Posterior cingulate gyrus (tissue), 11 donors: ENCODE measurements at regions of chr12 and their contacts with region 1.

Region 1: DNA sequence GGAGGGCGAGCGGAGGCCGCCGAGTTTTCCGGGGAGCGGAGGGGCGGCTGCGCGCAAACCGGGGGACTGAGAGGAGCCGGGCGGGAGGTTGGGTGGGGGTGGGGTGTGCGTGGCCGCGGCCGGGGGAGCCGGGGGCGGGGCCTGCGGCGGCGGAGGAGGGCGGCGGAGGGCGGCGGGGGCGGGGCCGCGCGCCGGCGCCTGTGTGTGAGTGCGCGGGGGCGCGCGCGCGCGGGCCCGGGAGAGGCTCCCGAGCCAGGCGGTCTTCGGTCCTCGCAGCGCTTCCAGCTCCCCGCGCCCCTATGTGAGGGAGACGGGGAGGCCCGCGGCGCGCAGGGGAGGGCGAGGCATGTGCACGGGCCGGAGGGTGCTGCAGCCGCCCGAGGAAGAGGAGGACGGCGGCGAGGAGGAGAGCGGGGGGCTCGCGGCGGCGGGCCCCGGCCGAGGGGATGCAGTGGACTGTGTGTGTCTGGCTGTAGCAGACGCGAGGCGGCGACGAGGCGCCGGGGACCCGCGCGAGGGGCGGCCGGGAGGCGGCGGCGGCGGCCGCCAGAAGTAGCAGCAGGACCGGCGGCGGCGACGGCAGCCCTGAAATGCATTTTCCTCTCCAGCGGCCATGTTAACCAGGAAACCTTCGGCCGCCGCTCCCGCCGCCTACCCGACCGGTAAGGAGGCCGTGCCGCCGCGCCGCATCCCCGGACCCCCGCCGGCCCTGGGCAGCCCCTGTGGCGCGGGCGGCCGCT is at the start of gene DYRK2:
- DNase-seq: peak; percentile 51 to 96 (median 67)

Region 2: GRCh38 chr12:67943226-67943892 is 294.7 kb after region 1 on chr12:
- intact Hi-C with region 1: loop called (anchors 5 kb)
- DNase-seq: peak in 5 of 10 donors; percentile 14 to 57 (median 34)